ENCODE measurements at regions of chr6 and their contacts with region 1.

Region 1: GRCh38 chr6:150395398-150396009 is 26.7 kb downstream of the IYD start:
- DNase-seq: no peak
- H3K4me3 ChIP-seq: no peak overlapping the region
- CTCF ChIP-seq: peak; percentile 62

Region 2: GRCh38 chr6:149863697-149864577 is 531.6 kb before region 1 on chr6 and contains the start of gene LRP11:
- CTCF ChIA-PET with region 1: no interaction called
- POLR2A ChIA-PET with region 1: no interaction called
- DNase-seq: no peak
- H3K4me3 ChIP-seq: peak within 1 kb of the TSS; percentile 67
- CTCF ChIP-seq: no peak

Region 3: GRCh38 chr6:149941583-149942431 is 453.7 kb before region 1 on chr6 and contains the start of gene ULBP2:
- CTCF ChIA-PET with region 1: interaction called, 12 read pairs
- POLR2A ChIA-PET with region 1: no interaction called
- DNase-seq: peak; percentile 83
- H3K4me3 ChIP-seq: peak within 1 kb of the TSS; percentile 77
- CTCF ChIP-seq: no peak

Region 4: GRCh38 chr6:150068720-150069648 is 326.5 kb before region 1 on chr6 and contains the start of gene ULBP3:
- CTCF ChIA-PET with region 1: interaction called, 170 read pairs
- POLR2A ChIA-PET with region 1: no interaction called
- DNase-seq: peak; percentile 68
- H3K4me3 ChIP-seq: peak within 1 kb of the TSS; percentile 76
- CTCF ChIP-seq: peak; percentile 75

Region 5: GRCh38 chr6:150352321-150353291 is 42.9 kb before region 1 on chr6:
- CTCF ChIA-PET with region 1: interaction called, 11 read pairs
- POLR2A ChIA-PET with region 1: no interaction called
- DNase-seq: peak; percentile 41
- H3K4me3 ChIP-seq: no peak overlapping the region
- CTCF ChIP-seq: peak; percentile 11

Region 6: GRCh38 chr6:150409576-150410066 is 14.1 kb after region 1 on chr6:
- CTCF ChIA-PET with region 1: interaction called, 89 read pairs
- POLR2A ChIA-PET with region 1: no interaction called
- DNase-seq: no peak
- H3K4me3 ChIP-seq: no peak overlapping the region
- CTCF ChIP-seq: no peak

Measured in AG04449 (cell line).